ENCODE measurements at regions of chr17 and their contacts with region 1.

Region 1: DNA sequence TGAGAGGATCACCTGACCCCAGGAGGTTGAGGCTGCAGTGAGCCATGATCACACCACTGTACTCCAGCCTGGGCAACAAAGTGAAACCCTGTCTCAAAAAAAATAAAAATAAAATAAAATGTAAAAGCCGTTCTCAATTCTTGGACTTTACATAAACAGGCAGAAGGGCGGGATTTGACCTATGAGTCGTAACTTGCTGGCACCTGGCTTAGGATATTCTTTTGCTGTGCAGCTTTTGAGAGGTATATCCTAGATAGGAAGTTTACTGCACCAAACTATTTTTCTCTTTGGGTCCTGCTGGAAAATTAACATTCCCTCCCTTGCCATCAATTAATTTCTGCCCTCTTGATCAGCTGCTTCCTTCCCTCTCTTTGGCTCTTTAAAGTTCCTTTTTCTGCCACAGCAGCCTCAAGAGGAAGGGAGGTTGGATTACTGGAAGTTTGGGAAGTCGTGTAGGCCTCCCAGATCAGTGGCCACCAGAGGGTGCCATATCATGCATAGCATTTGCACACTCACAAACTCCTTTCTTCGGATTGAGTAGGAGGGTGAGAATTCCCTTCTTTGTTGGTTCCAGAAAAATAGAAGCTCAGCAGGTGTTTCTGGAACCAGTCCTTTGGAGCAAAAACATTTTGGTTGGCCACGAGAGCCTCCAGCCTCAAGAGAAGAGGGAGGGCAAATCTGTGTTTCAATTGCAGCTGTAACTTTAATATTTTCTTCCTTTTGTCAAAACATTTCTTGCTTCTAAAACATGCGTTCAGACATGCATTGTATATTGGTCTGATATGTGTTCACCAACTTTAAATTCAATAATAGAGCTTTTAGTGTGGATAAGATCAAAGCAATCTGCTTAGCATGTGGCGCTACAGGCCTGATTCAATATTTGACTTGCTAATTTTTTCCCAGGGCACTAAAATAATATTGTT is 147.3 kb downstream of the CCDC182 start:
- DNase-seq: peak in 11 of 35 experiments; percentile 15 to 62 (median 24)
- ATAC-seq: no peak
- H3K4me3 ChIP-seq: no peak overlapping the region
- H3K4me3 Mint-ChIP-seq: peak overlapping the region in 1 of 3 donors; percentile 67
- H3K27ac ChIP-seq: peak overlapping the region; percentile 25
- H3K27ac Mint-ChIP-seq: peak overlapping the region; percentile 96 to 98
- H3K4me1 ChIP-seq: peaks cover 37 to 55% of the 10 kb centered on the region in 2 experiments
- H3K4me1 Mint-ChIP-seq: peaks cover 53 to 54% (median 53%) of the 10 kb centered on the region in 3 donors
- H3K27me3 ChIP-seq: no peaks in the 10 kb centered on the region
- H3K27me3 Mint-ChIP-seq: no peaks in the 10 kb centered on the region

Region 2: DNA sequence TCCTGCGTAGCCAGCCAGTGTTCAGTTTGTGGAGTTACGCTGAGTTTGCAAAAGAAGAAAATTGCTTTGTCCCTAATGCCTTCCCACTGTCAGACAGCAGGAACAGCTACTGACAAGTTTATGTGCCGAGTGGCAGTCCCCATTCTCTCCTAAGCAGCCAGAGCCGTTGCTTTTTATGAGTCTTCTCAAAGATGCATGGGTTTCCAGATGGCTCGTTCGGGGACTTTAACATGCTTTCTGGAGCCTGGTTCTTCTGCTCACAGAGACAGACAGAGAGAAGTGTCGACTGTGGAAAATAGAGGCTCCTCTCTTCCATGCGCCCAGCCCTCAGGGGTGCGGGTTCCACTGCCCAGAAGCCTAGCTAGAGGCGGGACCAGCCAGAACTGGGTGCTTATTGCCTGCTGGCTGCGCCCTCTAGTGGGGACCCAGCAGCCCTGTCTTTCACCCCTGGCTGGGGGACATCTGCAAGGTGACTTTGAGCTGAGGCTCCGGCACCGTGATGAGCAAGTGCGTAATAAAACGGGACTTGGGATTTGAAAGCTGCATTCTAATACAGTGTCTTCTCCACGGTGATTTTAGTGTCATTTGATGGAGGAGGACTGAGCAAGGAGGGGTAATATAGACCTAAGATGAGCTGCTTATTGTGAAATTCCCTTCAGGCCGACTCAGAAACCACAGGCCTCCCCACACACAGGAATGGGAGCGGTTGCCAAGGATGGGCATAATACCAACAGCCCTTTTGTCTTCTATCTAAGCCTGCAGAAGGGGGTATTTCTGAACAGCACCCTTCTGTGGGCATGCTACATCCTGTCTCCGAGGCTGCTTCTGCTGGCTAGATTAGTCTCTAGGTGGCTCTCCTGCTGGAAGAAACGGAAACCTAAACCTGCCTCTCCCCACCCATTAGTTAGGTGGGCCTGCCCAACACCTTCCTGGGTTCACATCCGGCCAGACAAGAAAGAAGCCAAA is 74.2 kb after region 1 on chr17:
- CTCF ChIA-PET with region 1: interaction called, 11 to 16 read pairs
- POLR2A ChIA-PET with region 1: no interaction called
- DNase-seq: peak; percentile 33 to 80 (median 60)
- ATAC-seq: peak; percentile 79 to 87 (median 81)
- H3K4me3 ChIP-seq: no peak overlapping the region
- H3K4me3 Mint-ChIP-seq: peak overlapping the region in 2 of 3 donors; percentile 37 to 39
- H3K27ac ChIP-seq: peak overlapping the region; percentile 47
- H3K27ac Mint-ChIP-seq: peak overlapping the region; percentile 83 to 84
- H3K4me1 ChIP-seq: peaks cover 3 to 29% of the 10 kb centered on the region in 2 experiments
- H3K4me1 Mint-ChIP-seq: peaks cover 20 to 37% (median 36%) of the 10 kb centered on the region in 3 donors
- H3K27me3 ChIP-seq: no peaks in the 10 kb centered on the region
- H3K27me3 Mint-ChIP-seq: no peaks in the 10 kb centered on the region